Heart left ventricle (tissue), 16 donors: ENCODE measurements at regions of chr2 and their contacts with region 1.

Region 1: GRCh38 chr2:151792589-151792988 is 35.6 kb downstream of the ARL5A start:
- DNase-seq: no peak
- ATAC-seq: no peak
- H3K4me3 ChIP-seq: no peak overlapping the region
- H3K27ac ChIP-seq: no peak overlapping the region
- H3K4me1 ChIP-seq: peaks cover 0 to 10% (median 0%) of the 10 kb centered on the region in 12 donors
- H3K27me3 ChIP-seq: no peaks in the 10 kb centered on the region
- CTCF ChIP-seq: peak in 1 of 12 donors; percentile 11
- POLR2A ChIP-seq: no peak

Region 2: GRCh38 chr2:151556121-151556520 is 236.5 kb before region 1 on chr2:
- intact Hi-C with region 1: no loop called
- DNase-seq: no peak
- ATAC-seq: no peak
- H3K4me3 ChIP-seq: no peak overlapping the region
- H3K27ac ChIP-seq: no peak overlapping the region
- H3K4me1 ChIP-seq: peaks cover 0 to 6% (median 0%) of the 10 kb centered on the region in 12 donors
- H3K27me3 ChIP-seq: no peaks in the 10 kb centered on the region
- CTCF ChIP-seq: no peak
- POLR2A ChIP-seq: no peak

Region 3: GRCh38 chr2:151627361-151627760 is 165.2 kb before region 1 on chr2:
- intact Hi-C with region 1: loop called in 1 of 10 experiments (anchors 10 kb)
- DNase-seq: no peak
- ATAC-seq: no peak
- H3K4me3 ChIP-seq: no peak overlapping the region
- H3K27ac ChIP-seq: no peak overlapping the region
- H3K4me1 ChIP-seq: no peaks in the 10 kb centered on the region
- H3K27me3 ChIP-seq: no peaks in the 10 kb centered on the region
- CTCF ChIP-seq: no peak
- POLR2A ChIP-seq: no peak

Region 4: DNA sequence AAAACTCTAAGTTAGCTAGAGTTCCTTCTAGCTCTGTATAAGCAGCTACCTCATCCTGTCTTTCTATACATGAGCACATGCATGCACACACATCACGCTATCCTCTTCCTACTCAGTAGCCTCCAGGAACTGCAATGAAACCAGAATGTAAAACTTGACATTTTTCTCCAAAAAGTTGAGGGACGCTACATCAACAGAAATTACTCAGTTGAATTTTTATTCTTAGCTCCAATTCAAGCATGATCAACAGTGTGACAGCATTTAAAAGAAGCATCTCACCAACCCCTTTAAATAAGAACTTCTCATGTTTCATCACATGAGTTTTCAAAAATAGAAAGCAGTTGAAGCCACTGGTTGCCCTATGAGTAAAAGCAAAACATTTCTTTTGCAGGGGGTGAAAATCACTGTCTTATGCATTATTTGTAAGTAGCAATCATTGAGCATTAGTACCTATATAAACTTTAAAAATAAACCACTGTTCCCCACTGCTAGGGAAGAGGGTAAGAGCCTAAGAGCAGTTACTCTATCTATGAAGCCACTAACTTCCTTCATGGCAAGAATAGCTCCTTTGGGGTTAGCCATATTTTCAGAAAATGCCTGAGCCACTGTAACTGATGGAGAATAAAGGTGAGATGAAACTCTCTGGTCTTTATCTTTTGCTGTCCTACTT is 113.5 kb after region 1 on chr2:
- intact Hi-C with region 1: no loop called
- DNase-seq: no peak
- ATAC-seq: no peak
- H3K4me3 ChIP-seq: no peak overlapping the region
- H3K27ac ChIP-seq: no peak overlapping the region
- H3K4me1 ChIP-seq: peaks cover 0 to 43% (median 12%) of the 10 kb centered on the region in 12 donors
- H3K27me3 ChIP-seq: no peaks in the 10 kb centered on the region
- CTCF ChIP-seq: no peak
- POLR2A ChIP-seq: no peak